HepG2 (cell line): ENCODE measurements at regions of chr6 and their contacts with region 1.

Region 1: GRCh38 chr6:49519660-49520059 is 19.9 kb downstream of the GLYATL3 start:
- DNase-seq: no peak
- ATAC-seq: no peak
- H3K4me3 ChIP-seq: no peak overlapping the region
- H3K27ac ChIP-seq: no peak overlapping the region
- H3K4me1 ChIP-seq: peaks cover 57% of the 10 kb centered on the region
- H3K27me3 ChIP-seq: no peaks in the 10 kb centered on the region
- CTCF ChIP-seq: no peak
- EP300 ChIP-seq: no peak
- POLR2A ChIP-seq: no peak
- RAD21 ChIP-seq: no peak

Region 2: DNA sequence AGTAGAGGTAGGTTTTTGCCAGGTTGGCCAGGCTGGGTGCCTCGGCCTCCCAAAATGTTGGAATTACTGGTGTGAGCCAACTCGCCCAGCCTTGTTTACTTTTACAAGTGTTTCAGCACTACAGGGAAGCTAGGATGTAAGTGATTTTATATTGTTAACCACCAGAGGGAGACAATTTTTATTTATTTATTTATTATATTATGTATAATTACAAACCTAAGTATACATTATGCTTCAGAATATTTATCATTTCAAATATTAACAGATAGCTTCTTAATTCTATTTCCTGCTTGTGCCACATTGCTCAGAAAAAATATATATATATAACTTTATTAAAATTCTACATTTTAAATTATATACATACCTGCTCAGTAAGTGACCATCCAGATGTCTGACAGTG is 66.4 kb before region 1 on chr6:
- CTCF ChIA-PET with region 1: no interaction called
- POLR2A ChIA-PET with region 1: no interaction called
- in situ Hi-C with region 1: no loop called
- intact Hi-C with region 1: loop called (anchors 2 kb)
- DNase-seq: peak; percentile 6
- ATAC-seq: peak; percentile 60; the same call in 2 of the 3 replicates
- H3K4me3 ChIP-seq: no peak overlapping the region
- H3K27ac ChIP-seq: no peak overlapping the region
- H3K4me1 ChIP-seq: no peaks in the 10 kb centered on the region
- H3K27me3 ChIP-seq: no peaks in the 10 kb centered on the region
- CTCF ChIP-seq: peak; percentile 21; the same call in 1 of the 2 replicates
- EP300 ChIP-seq: no peak
- POLR2A ChIP-seq: no peak
- RAD21 ChIP-seq: no peak

Region 3: GRCh38 chr6:49506569-49507111 is 13.0 kb before region 1 on chr6:
- CTCF ChIA-PET with region 1: no interaction called
- POLR2A ChIA-PET with region 1: interaction called, 3 read pairs
- in situ Hi-C with region 1: no loop called
- intact Hi-C with region 1: loop called (anchors 2 kb)
- DNase-seq: peak; percentile 90
- ATAC-seq: peak; percentile 98
- H3K4me3 ChIP-seq: peak overlapping the region in 1 of 3 experiments; percentile 41; a peak in 3 of 6 replicates
- H3K27ac ChIP-seq: peak overlapping the region; percentile 85
- H3K4me1 ChIP-seq: peaks cover 42% of the 10 kb centered on the region
- H3K27me3 ChIP-seq: no peaks in the 10 kb centered on the region
- CTCF ChIP-seq: no peak
- EP300 ChIP-seq: peak; percentile 9 to 71; a peak in 2 of 4 replicates
- POLR2A ChIP-seq: peak in 1 of 2 experiments; percentile 22; a peak in 1 of 4 replicates
- RAD21 ChIP-seq: no peak

Region 4: DNA sequence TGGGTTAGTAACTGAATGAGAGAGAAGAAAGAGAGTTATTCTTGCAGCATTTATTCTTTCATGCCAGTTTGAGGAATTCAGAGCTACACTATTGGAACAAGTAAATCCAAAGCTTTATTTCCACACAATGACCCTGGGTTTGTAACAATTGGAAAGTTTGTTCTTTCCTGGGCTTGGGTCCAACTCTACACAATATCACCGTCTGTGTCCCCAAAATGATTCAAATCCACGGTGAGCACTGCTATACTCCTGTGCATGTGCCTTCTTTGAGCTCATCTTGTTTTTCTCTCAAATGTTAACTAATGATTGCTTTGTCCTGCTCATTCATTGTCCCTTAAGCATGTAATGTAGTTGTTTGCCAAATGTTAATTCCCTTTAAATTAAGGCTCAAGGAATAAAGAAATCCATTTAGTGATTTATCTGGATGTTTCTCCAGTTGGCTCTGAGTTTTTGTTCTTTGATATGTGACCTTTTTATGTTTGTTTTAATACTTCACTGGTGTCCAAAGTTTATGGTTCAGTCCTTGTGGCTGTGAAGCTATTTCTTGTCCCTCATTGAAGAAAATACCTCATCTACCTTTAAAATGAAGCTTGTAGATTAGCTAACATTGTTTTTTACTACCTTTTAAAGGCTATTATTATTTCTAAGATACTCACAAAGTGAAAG is 245.0 kb after region 1 on chr6:
- CTCF ChIA-PET with region 1: no interaction called
- POLR2A ChIA-PET with region 1: no interaction called
- in situ Hi-C with region 1: no loop called
- intact Hi-C with region 1: loop called (anchors 5 kb)
- DNase-seq: peak; percentile 70
- ATAC-seq: peak; percentile 69
- H3K4me3 ChIP-seq: 0 out of 6 replicates have a peak overlapping the region, but pooled peaks of 1 of the 3 experiments have one; percentile 6
- H3K27ac ChIP-seq: peak overlapping the region; percentile 19
- H3K4me1 ChIP-seq: peaks cover 38% of the 10 kb centered on the region
- H3K27me3 ChIP-seq: no peaks in the 10 kb centered on the region
- CTCF ChIP-seq: no peak
- EP300 ChIP-seq: no peak; a peak in 1 of 4 replicates
- POLR2A ChIP-seq: no peak
- RAD21 ChIP-seq: no peak

Region 5: DNA sequence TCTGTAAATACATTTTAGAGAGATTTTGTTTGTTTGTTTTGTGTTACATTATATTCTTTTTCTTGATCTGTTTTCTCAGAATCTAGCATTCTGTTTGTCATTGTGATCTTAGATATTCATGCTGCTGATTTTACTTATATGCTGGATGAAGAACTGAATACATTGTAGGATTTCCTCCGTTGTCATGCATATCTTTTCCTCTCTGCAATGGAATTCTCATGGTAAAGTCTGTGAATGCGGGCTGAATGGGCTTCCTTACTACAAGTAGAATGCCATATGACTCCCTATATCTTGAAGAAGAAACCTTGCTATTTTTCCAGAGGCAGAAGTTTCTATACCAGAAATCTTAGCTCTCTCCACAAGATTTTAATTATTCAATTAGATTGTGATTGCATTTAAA is 446.7 kb after region 1 on chr6:
- CTCF ChIA-PET with region 1: no interaction called
- POLR2A ChIA-PET with region 1: no interaction called
- in situ Hi-C with region 1: no loop called
- intact Hi-C with region 1: no loop called
- DNase-seq: no peak
- ATAC-seq: no peak
- H3K4me3 ChIP-seq: no peak overlapping the region
- H3K27ac ChIP-seq: no peak overlapping the region
- H3K4me1 ChIP-seq: no peaks in the 10 kb centered on the region
- H3K27me3 ChIP-seq: no peaks in the 10 kb centered on the region
- CTCF ChIP-seq: no peak
- EP300 ChIP-seq: no peak
- POLR2A ChIP-seq: no peak
- RAD21 ChIP-seq: no peak